ENCODE measurements at regions of chr7 and their contacts with region 1.

Region 1: DNA sequence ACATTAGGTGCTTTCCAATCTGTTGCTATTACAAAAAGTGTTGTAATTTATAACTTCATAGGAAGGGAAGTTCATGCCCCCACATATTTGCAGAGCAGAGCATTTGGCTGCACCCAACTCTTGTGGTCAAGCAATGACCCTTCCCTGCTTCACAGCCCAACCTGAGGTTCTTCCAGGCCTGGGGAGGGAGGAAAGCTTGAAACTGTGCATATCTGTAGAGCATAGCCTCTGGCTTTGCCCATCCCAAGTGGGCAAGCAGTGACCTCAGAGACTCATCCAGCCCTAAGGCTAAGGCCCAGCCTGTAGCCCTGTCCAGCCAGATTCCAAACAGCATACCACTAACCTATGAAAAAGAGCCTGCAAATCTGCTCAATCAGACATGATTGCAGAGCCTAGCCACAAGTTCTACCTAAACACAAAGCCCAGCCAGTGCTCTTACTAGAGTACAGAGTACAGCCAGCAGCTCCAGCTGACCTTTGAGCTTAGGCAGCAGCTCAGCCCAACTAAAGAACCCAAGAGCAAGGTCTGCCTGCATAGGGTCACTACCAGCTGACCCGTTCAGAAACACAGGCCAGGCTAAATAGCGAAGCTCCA is 14.4 kb upstream of the GSTK1 start:
- DNase-seq: no peak
- ATAC-seq: no peak
- H3K4me3 Mint-ChIP-seq: no peak overlapping the region
- H3K27ac Mint-ChIP-seq: no peak overlapping the region
- H3K4me1 Mint-ChIP-seq: peaks cover 54% of the 10 kb centered on the region
- H3K27me3 Mint-ChIP-seq: no peaks in the 10 kb centered on the region
- CTCF ChIP-seq: no peak

Region 2: GRCh38 chr7:143263266-143264195 is 14.7 kb after region 1 on chr7 and contains the start of gene GSTK1:
- CTCF ChIA-PET with region 1: interaction called, 3 read pairs
- POLR2A ChIA-PET with region 1: interaction called, 3 read pairs
- intact Hi-C with region 1: loop called (anchors 1 kb)
- DNase-seq: peak; percentile 68
- ATAC-seq: peak; percentile 97
- H3K4me3 Mint-ChIP-seq: peak within 1 kb of the TSS; percentile 95
- H3K27ac Mint-ChIP-seq: peak within 1 kb of the TSS; percentile 83
- H3K4me1 Mint-ChIP-seq: peaks cover 52% of the 10 kb centered on the region
- H3K27me3 Mint-ChIP-seq: no peaks in the 10 kb centered on the region
- CTCF ChIP-seq: no peak
- total RNA-seq, gene GSTK1: 144 and 150 TPM in 2 replicates